ENCODE measurements at regions of chr1 and their contacts with region 1.

Region 1: DNA sequence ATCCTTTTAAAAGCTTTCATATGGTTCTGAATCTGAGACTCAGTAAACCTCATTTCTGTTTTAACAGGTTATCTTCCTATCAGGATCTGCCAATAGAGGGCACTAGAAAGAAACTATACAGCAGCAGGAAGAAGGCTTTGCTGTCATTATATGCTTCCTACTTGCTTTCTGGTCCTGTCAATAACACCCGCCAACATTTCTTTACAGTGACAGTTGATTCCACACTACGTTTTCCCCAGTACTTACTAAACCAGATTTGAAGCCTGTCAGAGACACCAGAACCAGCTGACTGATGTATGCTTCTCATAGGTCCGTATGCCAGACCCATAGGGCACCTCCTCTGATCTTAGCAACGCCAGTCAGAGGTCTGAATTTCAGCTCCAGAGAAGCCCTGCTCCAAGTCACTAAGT is 341.0 kb upstream of the NEGR1 start:
- DNase-seq: peak; percentile 41

Region 2: DNA sequence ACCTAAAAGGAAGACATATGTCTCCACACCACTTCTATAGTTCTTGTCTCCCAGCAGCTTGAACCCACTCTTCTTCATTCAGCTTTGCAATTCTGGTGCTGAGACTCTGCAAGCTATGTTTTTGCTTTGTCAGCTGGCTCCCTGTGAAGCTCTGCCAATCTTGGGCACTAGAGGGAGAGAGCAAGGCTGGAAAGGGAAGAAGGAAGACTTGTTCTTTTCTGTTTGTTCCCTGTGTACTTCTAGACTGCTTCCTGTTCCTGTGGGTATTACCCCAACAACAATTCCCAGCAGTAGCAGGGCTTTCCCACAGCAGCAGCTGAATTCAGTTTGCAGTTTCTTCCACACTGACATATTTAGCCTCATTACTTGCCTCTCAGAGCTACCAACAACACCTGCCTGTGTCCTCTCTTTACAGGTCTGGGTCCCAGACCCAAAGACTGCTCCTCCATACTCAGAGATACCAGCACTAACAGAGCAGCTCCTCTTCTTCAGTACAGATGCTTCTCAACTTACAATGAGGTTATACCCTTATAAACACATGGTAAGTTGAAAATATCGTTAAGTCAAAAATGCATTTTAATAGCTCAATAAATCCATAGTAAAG is 65.8 kb before region 1 on chr1:
- intact Hi-C with region 1: no loop called
- DNase-seq: no peak

Region 3: GRCh38 chr1:73909043-73909562 is 1285.8 kb after region 1 on chr1:
- intact Hi-C with region 1: loop called in 1 of 2 experiments (anchors 5 kb)
- DNase-seq: no peak